MCF 10A (cell line): ENCODE measurements at regions of chr17 and their contacts with region 1.

Region 1: DNA sequence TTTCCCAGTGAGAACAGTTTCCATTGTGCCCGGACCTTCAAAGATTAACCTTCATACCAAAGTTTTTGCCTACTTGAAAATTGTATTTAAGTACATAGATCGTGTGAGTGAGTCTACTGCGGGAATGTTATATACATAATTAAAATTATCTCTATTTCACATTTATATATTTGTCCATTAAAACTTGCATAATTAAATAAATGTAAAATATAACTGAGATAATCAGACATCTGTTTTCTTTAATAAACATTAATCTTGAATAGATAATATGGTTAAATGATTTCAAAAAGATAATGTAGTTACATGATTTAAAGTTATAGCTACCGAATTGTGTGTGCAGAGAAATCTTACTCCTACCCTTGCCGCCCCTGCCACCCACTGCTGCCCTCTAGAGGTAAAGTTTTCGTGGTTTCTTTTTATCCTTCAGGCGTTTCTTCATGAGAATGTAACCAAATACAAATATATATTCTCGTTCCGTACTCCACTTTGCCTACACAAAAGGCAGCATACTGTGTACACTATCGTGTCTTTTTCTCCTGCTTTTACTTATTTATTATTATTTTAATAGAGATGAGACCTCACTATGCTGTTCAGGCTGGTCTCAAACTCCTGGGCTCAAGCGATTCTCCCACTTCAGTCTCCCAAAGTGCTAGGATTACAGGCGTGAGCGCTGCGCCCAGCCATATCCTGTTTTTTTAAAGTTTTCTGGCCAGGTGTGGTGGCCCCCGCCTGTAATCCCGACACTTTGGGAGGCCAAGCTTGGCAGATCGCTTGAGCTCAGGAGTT is 35.6 kb downstream of the RPA1 start:
- DNase-seq: peak; percentile 61
- H3K4me3 Mint-ChIP-seq: no peak overlapping the region
- H3K27ac Mint-ChIP-seq: no peak overlapping the region
- H3K4me1 Mint-ChIP-seq: no peaks in the 10 kb centered on the region
- H3K27me3 Mint-ChIP-seq: no peaks in the 10 kb centered on the region
- CTCF ChIP-seq: peak; percentile 68

Region 2: GRCh38 chr17:1229432-1229899 is 636.0 kb before region 1 on chr17:
- CTCF ChIA-PET with region 1: no interaction called
- POLR2A ChIA-PET with region 1: no interaction called
- intact Hi-C with region 1: no loop called
- DNase-seq: no peak
- H3K4me3 Mint-ChIP-seq: no peak overlapping the region
- H3K27ac Mint-ChIP-seq: no peak overlapping the region
- H3K4me1 Mint-ChIP-seq: peaks cover 18% of the 10 kb centered on the region
- H3K27me3 Mint-ChIP-seq: peaks cover 15% of the 10 kb centered on the region
- CTCF ChIP-seq: no peak

Region 3: DNA sequence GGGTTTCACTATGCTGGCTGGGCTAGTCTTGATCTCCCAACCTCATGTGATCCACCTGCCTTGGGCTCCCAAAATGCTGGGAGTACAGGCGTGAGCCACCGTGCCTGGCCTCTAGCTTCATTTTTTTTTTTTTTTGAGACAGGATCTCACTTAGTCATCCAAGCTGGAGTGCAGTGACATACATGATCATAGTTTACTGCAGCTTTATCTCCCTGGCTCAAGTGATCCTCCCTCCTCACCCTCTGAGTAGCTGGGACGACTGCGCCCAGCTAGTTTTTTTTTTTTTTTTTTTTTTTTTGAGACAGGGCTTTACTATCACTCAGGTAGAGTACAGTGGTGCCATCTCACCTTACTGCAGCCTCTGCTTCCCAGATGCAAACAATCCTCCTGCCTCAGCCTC is 25.9 kb before region 1 on chr17:
- CTCF ChIA-PET with region 1: interaction called, 10 read pairs
- POLR2A ChIA-PET with region 1: no interaction called
- intact Hi-C with region 1: no loop called
- DNase-seq: no peak
- H3K4me3 Mint-ChIP-seq: no peak overlapping the region
- H3K27ac Mint-ChIP-seq: no peak overlapping the region
- H3K4me1 Mint-ChIP-seq: peaks cover 6% of the 10 kb centered on the region
- H3K27me3 Mint-ChIP-seq: no peaks in the 10 kb centered on the region
- CTCF ChIP-seq: no peak